ENCODE measurements at regions of chr1 and their contacts with region 1.

Region 1: GRCh38 chr1:206766251-206766856 is 4.2 kb upstream of the IL19 start:
- DNase-seq: peak; percentile 74
- ATAC-seq: peak; percentile 75
- H3K4me3 ChIP-seq: no peak overlapping the region
- H3K4me3 Mint-ChIP-seq: peak overlapping the region; percentile 69
- H3K27ac ChIP-seq: no peak overlapping the region
- H3K27ac Mint-ChIP-seq: peak overlapping the region; percentile 51
- H3K4me1 ChIP-seq: peaks cover 36 to 41% of the 10 kb centered on the region in 2 donors
- H3K4me1 Mint-ChIP-seq: peaks cover 51% of the 10 kb centered on the region
- H3K27me3 ChIP-seq: no peaks in the 10 kb centered on the region
- H3K27me3 Mint-ChIP-seq: no peaks in the 10 kb centered on the region
- CTCF ChIP-seq: no peak

Region 2: DNA sequence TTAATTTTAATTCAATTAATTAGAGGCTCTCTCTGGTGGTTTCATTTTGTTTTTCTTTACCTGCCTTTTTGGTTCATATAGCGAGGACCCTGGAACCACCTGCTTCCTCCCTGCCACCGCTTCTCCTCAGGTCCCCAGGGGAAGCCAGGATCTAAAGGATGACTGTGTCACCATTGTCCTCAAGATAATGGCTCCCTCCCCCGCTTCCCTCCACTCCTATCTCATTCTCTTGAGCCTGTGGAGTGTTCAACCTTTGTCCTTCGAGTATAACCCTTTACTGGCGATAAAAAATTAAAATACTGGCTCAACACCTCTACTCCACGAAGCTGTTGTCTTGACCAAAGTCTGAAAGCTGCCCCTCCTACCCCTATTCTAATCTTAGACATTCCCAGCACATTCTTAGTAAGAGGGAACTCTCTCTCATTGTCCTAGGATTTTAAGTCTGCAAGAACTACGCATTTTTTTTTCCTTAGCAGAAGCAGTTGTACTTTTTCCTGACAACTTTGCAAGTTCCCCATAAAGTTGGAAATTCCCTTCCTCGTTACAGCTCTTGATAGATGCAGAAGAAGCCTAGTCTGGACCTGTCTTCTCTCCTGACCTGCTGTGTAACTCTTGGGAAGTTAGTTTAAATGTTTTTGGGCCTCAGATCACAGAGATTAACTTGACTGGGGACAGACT is 94.2 kb before region 1 on chr1:
- CTCF ChIA-PET with region 1: no interaction called
- POLR2A ChIA-PET with region 1: no interaction called
- intact Hi-C with region 1: no loop called
- DNase-seq: peak; percentile 36
- ATAC-seq: peak; percentile 12
- H3K4me3 ChIP-seq: no peak overlapping the region
- H3K4me3 Mint-ChIP-seq: no peak overlapping the region
- H3K27ac ChIP-seq: no peak overlapping the region
- H3K27ac Mint-ChIP-seq: no peak overlapping the region
- H3K4me1 ChIP-seq: peaks cover 28 to 34% of the 10 kb centered on the region in 2 donors
- H3K4me1 Mint-ChIP-seq: peaks cover 16% of the 10 kb centered on the region
- H3K27me3 ChIP-seq: peaks cover 0 to 31% (median 7%) of the 10 kb centered on the region in 4 experiments
- H3K27me3 Mint-ChIP-seq: peaks cover 22% of the 10 kb centered on the region
- CTCF ChIP-seq: no peak

Region 3: GRCh38 chr1:206742719-206743383 is 23.5 kb before region 1 on chr1:
- CTCF ChIA-PET with region 1: interaction called, 8 read pairs
- POLR2A ChIA-PET with region 1: no interaction called
- intact Hi-C with region 1: loop called (anchors 2 kb)
- DNase-seq: no peak
- ATAC-seq: peak; percentile 54
- H3K4me3 ChIP-seq: no peak overlapping the region
- H3K4me3 Mint-ChIP-seq: peak overlapping the region; percentile 47
- H3K27ac ChIP-seq: no peak overlapping the region
- H3K27ac Mint-ChIP-seq: peak overlapping the region; percentile 86
- H3K4me1 ChIP-seq: peaks cover 29 to 43% of the 10 kb centered on the region in 2 donors
- H3K4me1 Mint-ChIP-seq: peaks cover 60% of the 10 kb centered on the region
- H3K27me3 ChIP-seq: no peaks in the 10 kb centered on the region
- H3K27me3 Mint-ChIP-seq: no peaks in the 10 kb centered on the region
- CTCF ChIP-seq: no peak

Region 4: DNA sequence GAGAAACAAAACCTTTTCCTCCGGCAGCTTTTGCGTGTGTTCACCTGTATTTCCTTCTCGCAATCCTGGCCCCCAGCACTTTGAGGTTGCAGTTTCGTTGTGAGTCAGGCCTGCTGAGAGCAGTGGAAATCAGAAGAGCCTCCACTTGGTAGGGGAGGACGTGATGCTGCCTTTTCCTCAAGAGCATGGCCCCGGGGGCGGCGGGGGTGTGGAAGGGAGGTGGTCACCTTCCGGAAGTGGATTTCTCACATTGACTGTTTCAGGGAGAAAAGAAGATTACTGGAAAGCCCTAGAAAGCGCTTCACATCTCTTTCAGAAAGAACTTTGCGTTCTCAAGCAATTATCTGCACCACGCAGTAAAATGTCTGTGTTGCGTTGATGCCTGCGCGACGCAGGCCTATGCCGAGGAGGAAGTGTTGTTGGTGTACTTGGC is 18.1 kb after region 1 on chr1:
- CTCF ChIA-PET with region 1: interaction called, 10 read pairs
- POLR2A ChIA-PET with region 1: interaction called, 4 read pairs
- intact Hi-C with region 1: loop called (anchors 2 kb)
- DNase-seq: peak; percentile 78
- ATAC-seq: peak; percentile 64
- H3K4me3 ChIP-seq: no peak overlapping the region
- H3K4me3 Mint-ChIP-seq: peak overlapping the region; percentile 85
- H3K27ac ChIP-seq: no peak overlapping the region
- H3K27ac Mint-ChIP-seq: peak overlapping the region; percentile 94
- H3K4me1 ChIP-seq: peaks cover 56% of the 10 kb centered on the region in 2 donors
- H3K4me1 Mint-ChIP-seq: peaks cover 61% of the 10 kb centered on the region
- H3K27me3 ChIP-seq: no peaks in the 10 kb centered on the region
- H3K27me3 Mint-ChIP-seq: no peaks in the 10 kb centered on the region
- CTCF ChIP-seq: no peak

Region 5: DNA sequence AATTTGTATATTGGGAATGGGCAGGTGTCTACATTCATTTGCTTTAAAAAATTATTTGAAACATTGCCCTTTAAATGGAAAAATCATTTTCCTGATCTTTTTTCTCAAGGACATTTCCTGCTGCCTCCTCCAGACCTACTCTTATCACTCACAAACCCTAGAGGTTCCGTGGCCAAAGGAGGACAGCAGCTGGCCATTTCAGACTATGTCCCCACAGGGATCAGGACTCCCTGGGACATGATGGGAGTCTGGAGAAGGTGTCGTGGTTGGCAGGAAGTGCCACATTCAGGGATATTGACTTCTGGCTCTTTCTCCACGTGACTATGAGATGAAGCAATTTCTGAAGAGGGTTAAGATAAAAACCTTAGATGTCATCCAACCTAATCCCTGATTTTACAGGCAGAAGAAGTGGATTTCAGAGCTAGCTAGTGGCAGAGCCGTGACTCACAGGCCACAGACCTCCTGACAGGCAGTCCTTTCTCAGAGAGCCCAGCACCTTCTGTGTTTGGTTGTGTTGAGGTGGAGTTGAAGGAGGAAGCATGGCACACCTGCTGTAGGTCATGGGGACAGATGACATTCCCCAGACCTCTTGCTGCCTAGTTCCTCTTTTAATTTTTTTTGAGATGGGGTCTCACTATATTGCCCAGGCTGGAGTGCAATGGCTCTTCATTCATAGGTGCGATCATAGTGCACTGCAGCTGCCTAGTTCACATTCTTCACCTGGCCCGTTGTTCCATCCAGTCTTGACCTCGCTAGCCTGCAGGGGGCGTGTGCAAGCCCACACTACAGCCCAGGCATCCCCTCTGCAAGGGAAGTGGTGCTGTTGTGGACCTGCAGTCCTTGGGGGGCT is 31.4 kb after region 1 on chr1:
- CTCF ChIA-PET with region 1: interaction called, 13 read pairs
- POLR2A ChIA-PET with region 1: interaction called, 10 read pairs
- intact Hi-C with region 1: no loop called
- DNase-seq: peak; percentile 68
- ATAC-seq: peak; percentile 34
- H3K4me3 ChIP-seq: no peak overlapping the region
- H3K4me3 Mint-ChIP-seq: no peak overlapping the region
- H3K27ac ChIP-seq: no peak overlapping the region
- H3K27ac Mint-ChIP-seq: no peak overlapping the region
- H3K4me1 ChIP-seq: peaks cover 23 to 39% of the 10 kb centered on the region in 2 donors
- H3K4me1 Mint-ChIP-seq: peaks cover 63% of the 10 kb centered on the region
- H3K27me3 ChIP-seq: no peaks in the 10 kb centered on the region
- H3K27me3 Mint-ChIP-seq: no peaks in the 10 kb centered on the region
- CTCF ChIP-seq: peak; percentile 66

Region 6: GRCh38 chr1:206803221-206803730 is 36.9 kb after region 1 on chr1:
- CTCF ChIA-PET with region 1: interaction called, 55 read pairs
- POLR2A ChIA-PET with region 1: interaction called, 4 read pairs
- intact Hi-C with region 1: loop called (anchors 5 kb)
- DNase-seq: peak; percentile 70
- ATAC-seq: peak; percentile 90
- H3K4me3 ChIP-seq: no peak overlapping the region
- H3K4me3 Mint-ChIP-seq: peak overlapping the region; percentile 13
- H3K27ac ChIP-seq: no peak overlapping the region
- H3K27ac Mint-ChIP-seq: peak overlapping the region; percentile 87
- H3K4me1 ChIP-seq: peaks cover 4 to 19% of the 10 kb centered on the region in 2 donors
- H3K4me1 Mint-ChIP-seq: peaks cover 35% of the 10 kb centered on the region
- H3K27me3 ChIP-seq: no peaks in the 10 kb centered on the region
- H3K27me3 Mint-ChIP-seq: no peaks in the 10 kb centered on the region
- CTCF ChIP-seq: no peak

Measured in B cell (primary cell).